BJ (cell line): ENCODE measurements at regions of chr1 and their contacts with region 1.

Region 1: GRCh38 chr1:2545759-2546514 is 10.2 kb upstream of the TNFRSF14 start:
- DNase-seq: no peak
- H3K4me3 ChIP-seq: peak overlapping the region; percentile 55
- H3K27me3 ChIP-seq: no peaks in the 10 kb centered on the region
- CTCF ChIP-seq: no peak

Region 2: GRCh38 chr1:2412519-2413233 is 133.3 kb before region 1 on chr1 and contains the start of gene PEX10:
- CTCF ChIA-PET with region 1: interaction called, 71 read pairs
- POLR2A ChIA-PET with region 1: no interaction called
- DNase-seq: peak; percentile 59
- H3K4me3 ChIP-seq: peak within 1 kb of the TSS; percentile 95
- H3K27me3 ChIP-seq: no peaks in the 10 kb centered on the region
- CTCF ChIP-seq: no peak
- polyA plus RNA-seq, gene PEX10: 17.4 and 23.6 TPM in 2 replicates

Region 3: GRCh38 chr1:2534687-2535441 is 11.1 kb before region 1 on chr1:
- CTCF ChIA-PET with region 1: interaction called, 22 read pairs
- POLR2A ChIA-PET with region 1: no interaction called
- DNase-seq: no peak
- H3K4me3 ChIP-seq: no peak overlapping the region
- H3K27me3 ChIP-seq: peaks cover 3% of the 10 kb centered on the region; the same call in 1 of the 2 replicates
- CTCF ChIP-seq: no peak

Region 4: DNA sequence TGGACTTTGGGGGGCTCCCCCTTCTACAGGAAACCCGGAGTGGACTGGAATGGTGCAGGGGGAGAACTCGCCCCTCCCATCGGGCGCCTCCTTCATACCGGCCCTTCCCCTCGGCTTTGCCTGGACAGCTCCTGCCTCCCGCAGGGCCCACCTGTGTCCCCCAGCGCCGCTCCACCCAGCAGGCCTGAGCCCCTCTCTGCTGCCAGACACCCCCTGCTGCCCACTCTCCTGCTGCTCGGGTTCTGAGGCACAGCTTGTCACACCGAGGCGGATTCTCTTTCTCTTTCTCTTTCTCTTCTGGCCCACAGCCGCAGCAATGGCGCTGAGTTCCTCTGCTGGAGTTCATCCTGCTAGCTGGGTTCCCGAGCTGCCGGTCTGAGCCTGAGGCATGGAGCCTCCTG is 10.3 kb after region 1 on chr1 and contains the start of gene TNFRSF14:
- CTCF ChIA-PET with region 1: interaction called, 28 read pairs
- POLR2A ChIA-PET with region 1: no interaction called
- DNase-seq: no peak
- H3K4me3 ChIP-seq: peak within 1 kb of the TSS; percentile 56
- H3K27me3 ChIP-seq: no peaks in the 10 kb centered on the region
- CTCF ChIP-seq: peak; percentile 28
- polyA plus RNA-seq, gene TNFRSF14: 11.8 and 19.3 TPM in 2 replicates